ENCODE measurements at regions of chr5 and their contacts with region 1.

Region 1: DNA sequence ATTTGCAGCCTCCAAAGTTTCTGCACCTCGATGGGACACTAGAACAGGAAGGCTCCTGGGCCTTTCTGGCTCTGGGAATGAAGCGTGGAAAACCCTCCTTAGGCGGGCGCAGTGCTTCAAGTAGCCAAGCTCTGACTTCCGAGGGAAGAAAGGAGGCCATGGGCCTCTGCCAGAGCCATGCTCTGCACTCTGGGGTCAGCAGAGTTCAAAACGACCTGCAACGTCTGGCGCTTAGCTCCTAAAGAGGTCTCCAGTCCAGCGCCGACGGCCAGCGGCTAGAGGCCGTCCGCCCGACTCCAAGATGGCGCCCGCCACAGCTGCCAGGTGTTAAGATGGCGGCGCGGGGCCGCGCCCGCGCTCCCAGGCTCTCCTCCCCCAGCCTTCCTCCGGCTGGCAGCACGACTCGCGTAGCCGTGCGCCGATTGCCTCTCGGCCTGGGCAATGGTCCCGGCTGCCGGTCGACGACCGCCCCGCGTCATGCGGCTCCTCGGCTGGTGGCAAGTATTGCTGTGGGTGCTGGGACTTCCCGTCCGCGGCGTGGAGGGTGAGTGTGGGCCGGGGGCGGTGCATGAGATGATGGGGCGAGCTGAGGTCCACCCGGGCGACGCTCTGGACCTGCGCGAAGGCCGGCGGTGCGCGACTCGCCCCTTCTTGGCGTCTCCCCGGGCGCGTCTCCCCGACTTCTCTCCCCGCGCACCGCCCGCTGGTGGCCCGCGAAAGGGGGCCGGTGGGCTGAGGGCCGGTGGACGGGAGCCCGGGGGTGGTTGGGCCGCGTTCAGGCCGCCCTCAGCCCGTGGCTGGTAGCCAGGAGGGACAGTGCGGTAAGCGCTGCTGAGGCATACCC is at the start of gene TXNDC15:
- DNase-seq: peak; percentile 79 to 84 (median 81)
- H3K4me3 ChIP-seq: peak within 1 kb of the TSS; percentile 90 to 91
- H3K4me3 Mint-ChIP-seq: peak within 1 kb of the TSS; percentile 93 to 98 (median 94)
- H3K27ac ChIP-seq: peak within 1 kb of the TSS; percentile 78
- H3K27ac Mint-ChIP-seq: peak within 1 kb of the TSS; percentile 86 to 97 (median 96)
- H3K4me1 ChIP-seq: peaks cover 33% of the 10 kb centered on the region
- H3K4me1 Mint-ChIP-seq: peaks cover 26 to 49% (median 39%) of the 10 kb centered on the region in 4 donors
- H3K27me3 ChIP-seq: no peaks in the 10 kb centered on the region
- H3K27me3 Mint-ChIP-seq: no peaks in the 10 kb centered on the region
- total RNA-seq, gene TXNDC15: 42.8 to 52.0 TPM

Region 2: GRCh38 chr5:134758504-134759341 is 115.5 kb before region 1 on chr5 and contains the start of gene DDX46:
- CTCF ChIA-PET with region 1: no interaction called
- POLR2A ChIA-PET with region 1: interaction called, 6 read pairs
- intact Hi-C with region 1: loop called (anchors 1 kb)
- DNase-seq: peak; percentile 92 to 93 (median 92)
- H3K4me3 ChIP-seq: peak within 1 kb of the TSS; percentile 82 to 84
- H3K4me3 Mint-ChIP-seq: peak within 1 kb of the TSS; percentile 99 to 100 (median 100)
- H3K27ac ChIP-seq: peak within 1 kb of the TSS; percentile 83
- H3K27ac Mint-ChIP-seq: peak within 1 kb of the TSS; percentile 86 to 99 (median 98)
- H3K4me1 ChIP-seq: peaks cover 25% of the 10 kb centered on the region
- H3K4me1 Mint-ChIP-seq: peaks cover 28 to 44% (median 38%) of the 10 kb centered on the region in 4 donors
- H3K27me3 ChIP-seq: no peaks in the 10 kb centered on the region
- H3K27me3 Mint-ChIP-seq: no peaks in the 10 kb centered on the region
- total RNA-seq, gene DDX46: 59.9 to 66.8 TPM

Region 3: DNA sequence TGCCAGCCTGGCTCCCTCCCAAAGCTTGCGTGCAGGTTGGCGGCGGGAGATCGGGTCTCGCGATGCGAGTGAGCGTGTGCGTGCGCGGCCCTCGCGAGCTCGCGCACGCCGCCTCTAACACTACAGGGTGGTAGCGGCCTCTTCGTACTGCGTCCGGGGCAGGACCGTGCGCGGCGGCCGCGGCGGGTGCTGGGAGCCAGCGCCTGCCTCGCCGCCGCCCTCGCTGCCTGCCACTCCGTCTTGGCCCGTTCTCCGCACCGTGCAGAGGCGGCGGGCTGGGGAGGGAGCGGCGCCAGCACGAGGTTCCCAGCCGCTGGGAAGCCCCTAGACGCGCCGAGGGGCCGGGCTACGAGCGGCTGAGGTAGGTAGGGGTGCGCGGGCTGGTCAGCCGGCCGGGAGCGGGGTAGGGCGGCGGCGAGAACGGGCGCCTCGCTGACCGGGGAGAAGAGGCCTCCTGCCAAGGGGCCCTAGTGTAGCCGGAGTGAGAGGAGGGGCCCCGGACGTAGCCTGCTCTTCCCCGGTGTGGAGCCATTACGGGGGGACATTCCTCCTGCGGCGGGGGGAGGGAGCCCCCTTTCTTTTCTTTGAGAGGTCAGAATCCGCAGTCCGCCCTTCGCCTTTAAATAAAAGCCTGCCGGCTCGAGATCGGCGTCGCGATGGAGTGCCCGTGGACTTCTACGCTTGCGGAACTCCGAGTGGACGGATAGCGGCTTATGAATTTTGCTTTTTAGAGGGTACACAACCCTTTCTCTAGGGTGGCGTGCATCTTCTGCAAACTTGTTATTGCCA is 28.2 kb before region 1 on chr5 and contains the start of gene C5orf24:
- CTCF ChIA-PET with region 1: interaction called, 3 read pairs
- POLR2A ChIA-PET with region 1: interaction called, 69 read pairs
- intact Hi-C with region 1: loop called (anchors 1 kb)
- DNase-seq: peak; percentile 90 to 93 (median 92)
- H3K4me3 ChIP-seq: peak within 1 kb of the TSS; percentile 59 to 92
- H3K4me3 Mint-ChIP-seq: peak within 1 kb of the TSS; percentile 87 to 96 (median 92)
- H3K27ac ChIP-seq: peak within 1 kb of the TSS; percentile 94
- H3K27ac Mint-ChIP-seq: peak within 1 kb of the TSS; percentile 93 to 99 (median 97)
- H3K4me1 ChIP-seq: peaks cover 29% of the 10 kb centered on the region
- H3K4me1 Mint-ChIP-seq: peaks cover 16 to 42% (median 29%) of the 10 kb centered on the region in 4 donors
- H3K27me3 ChIP-seq: no peaks in the 10 kb centered on the region
- H3K27me3 Mint-ChIP-seq: no peaks in the 10 kb centered on the region
- total RNA-seq, gene C5orf24: 33.4 to 33.9 TPM

Region 4: GRCh38 chr5:135242021-135242865 is 368.0 kb after region 1 on chr5:
- CTCF ChIA-PET with region 1: no interaction called
- POLR2A ChIA-PET with region 1: no interaction called
- intact Hi-C with region 1: no loop called
- DNase-seq: no peak
- H3K4me3 ChIP-seq: no peak overlapping the region
- H3K4me3 Mint-ChIP-seq: no peak overlapping the region
- H3K27ac ChIP-seq: no peak overlapping the region
- H3K27ac Mint-ChIP-seq: no peak overlapping the region
- H3K4me1 ChIP-seq: no peaks in the 10 kb centered on the region
- H3K4me1 Mint-ChIP-seq: no peaks in the 10 kb centered on the region
- H3K27me3 ChIP-seq: no peaks in the 10 kb centered on the region
- H3K27me3 Mint-ChIP-seq: peaks cover 2 to 6% of the 10 kb centered on the region in 2 donors

Measured in CD4-positive, alpha-beta memory T cell (primary cell).